GM18951 (cell line): ENCODE measurements at regions of chr16 and their contacts with region 1.

Region 1: DNA sequence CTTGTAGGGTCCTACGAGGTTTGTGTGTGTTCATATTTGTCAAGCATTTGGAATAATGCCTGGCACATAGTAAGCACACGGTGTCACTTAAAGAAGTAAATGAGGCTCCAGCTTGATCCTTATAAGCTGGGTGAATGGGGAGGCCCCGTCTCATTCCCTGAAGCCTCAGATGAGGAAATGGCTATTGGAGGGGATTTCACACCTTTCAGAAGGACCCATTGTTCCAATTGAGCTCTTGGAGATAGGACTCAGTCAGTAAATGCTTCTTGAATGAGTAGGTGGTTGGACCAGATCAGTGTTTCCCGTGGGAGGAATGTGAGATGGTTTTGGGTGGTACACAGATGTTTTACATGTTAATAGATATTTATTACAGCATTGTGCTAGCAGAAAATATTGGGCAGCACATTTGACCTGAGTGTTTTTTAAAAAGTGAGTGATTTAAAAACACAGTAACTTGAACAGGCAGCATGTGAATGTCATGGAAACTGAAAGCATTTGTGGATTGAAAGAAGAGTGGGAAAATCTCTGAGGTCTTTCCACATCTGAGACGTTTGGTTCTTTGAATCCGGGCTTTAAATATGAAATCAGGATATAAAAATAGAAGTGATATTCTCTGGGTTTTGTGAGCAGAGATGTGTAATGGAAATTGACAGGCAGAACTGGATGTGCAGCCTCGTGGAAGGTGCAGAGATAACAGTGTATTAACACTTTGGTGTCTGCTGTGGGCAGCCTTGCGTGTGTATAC is 36.4 kb upstream of the ARHGAP17 start:
- POLR2A ChIP-seq: no peak

Region 2: DNA sequence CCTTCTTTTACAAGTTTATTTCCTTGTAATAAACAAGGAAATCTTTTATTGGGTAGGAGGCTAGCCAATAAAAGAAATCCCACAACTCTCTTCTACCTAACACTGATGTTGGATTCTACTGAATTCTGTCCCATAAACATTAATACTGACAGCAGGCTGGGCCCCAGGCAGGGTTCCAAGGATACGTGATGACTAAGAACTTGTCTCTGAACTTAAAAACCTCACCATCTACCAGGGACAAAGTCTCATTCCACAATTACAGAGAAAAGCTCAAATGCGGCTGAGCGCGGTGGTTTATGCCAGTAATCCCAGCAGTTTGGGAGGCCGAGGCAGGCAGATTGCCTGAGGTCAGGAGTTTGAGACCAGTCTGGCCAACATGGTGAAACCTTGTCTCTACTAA is 101.3 kb before region 1 on chr16:
- in situ Hi-C with region 1: no loop called
- POLR2A ChIP-seq: no peak

Region 3: GRCh38 chr16:25126820-25127232 is 75.2 kb after region 1 on chr16:
- in situ Hi-C with region 1: loop called (anchors 5 kb)
- POLR2A ChIP-seq: no peak

Region 4: GRCh38 chr16:25224731-25225319 is 173.2 kb after region 1 on chr16:
- in situ Hi-C with region 1: loop called (anchors 10 kb)
- POLR2A ChIP-seq: no peak